ENCODE measurements at regions of chr20 and their contacts with region 1.

Region 1: DNA sequence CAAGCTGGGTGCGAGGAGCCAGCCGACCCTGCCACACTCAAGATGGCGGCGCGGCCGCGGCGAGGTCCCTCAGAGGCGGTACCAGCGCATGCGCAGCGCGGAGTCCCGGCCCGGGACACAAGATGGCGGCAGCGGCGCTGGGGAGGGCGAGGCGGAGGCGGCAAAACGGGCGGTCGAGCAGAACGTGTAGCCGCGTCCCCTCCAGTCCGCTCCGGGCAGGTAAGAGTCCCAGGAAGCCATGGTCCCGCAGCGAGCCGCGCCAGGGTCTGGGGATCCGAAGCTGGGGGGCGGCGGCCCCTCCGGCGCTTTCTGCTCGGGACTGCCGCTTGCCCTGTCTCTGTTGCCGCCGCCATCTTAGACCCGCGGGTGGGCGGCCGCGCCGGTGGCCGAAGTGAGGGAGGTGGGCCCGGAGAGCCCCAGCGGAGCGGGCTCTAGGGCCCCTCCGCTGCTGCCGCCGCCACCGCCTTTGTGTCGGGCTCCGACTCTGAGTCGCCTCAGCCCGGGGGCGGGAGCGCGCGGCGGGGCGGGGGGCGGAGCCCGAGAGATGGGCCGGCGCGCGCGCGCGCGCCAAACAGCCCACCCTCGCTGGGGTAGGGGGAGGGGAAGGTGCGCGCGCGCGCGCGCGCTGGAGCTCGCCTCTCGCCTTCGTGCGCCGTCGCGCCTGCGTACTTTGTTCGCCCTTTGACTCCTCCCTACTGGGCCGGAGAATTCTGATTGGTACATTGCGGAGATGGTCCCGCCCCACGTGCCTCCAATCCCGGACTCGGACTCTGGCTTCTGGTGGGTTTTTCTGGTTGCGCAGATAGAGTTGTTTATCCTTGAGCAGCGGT is at the start of gene PCIF1:
- DNase-seq: peak; percentile 99
- ATAC-seq: peak; percentile 84
- H3K4me3 Mint-ChIP-seq: peak within 1 kb of the TSS; percentile 97
- H3K27ac Mint-ChIP-seq: peak within 1 kb of the TSS; percentile 99
- H3K4me1 Mint-ChIP-seq: peaks cover 27% of the 10 kb centered on the region
- H3K27me3 Mint-ChIP-seq: no peaks in the 10 kb centered on the region
- total RNA-seq, gene PCIF1: 24.0 to 27.4 TPM

Region 2: GRCh38 chr20:45792332-45792686 is 142.5 kb before region 1 on chr20:
- CTCF ChIA-PET with region 1: no interaction called
- POLR2A ChIA-PET with region 1: no interaction called
- intact Hi-C with region 1: loop called in 1 of 2 experiments (anchors 1 kb)
- DNase-seq: peak; percentile 12
- ATAC-seq: peak; percentile 2
- H3K4me3 Mint-ChIP-seq: peak overlapping the region; percentile 81
- H3K27ac Mint-ChIP-seq: peak overlapping the region; percentile 80
- H3K4me1 Mint-ChIP-seq: peaks cover 13% of the 10 kb centered on the region
- H3K27me3 Mint-ChIP-seq: no peaks in the 10 kb centered on the region

Region 3: GRCh38 chr20:45812157-45813020 is 122.4 kb before region 1 on chr20 and contains the start of gene UBE2C:
- CTCF ChIA-PET with region 1: no interaction called
- POLR2A ChIA-PET with region 1: interaction called, 3 read pairs
- intact Hi-C with region 1: loop called (anchors 1 to 2 kb)
- DNase-seq: peak; percentile 97
- ATAC-seq: peak; percentile 100
- H3K4me3 Mint-ChIP-seq: peak within 1 kb of the TSS; percentile 99
- H3K27ac Mint-ChIP-seq: peak within 1 kb of the TSS; percentile 88
- H3K4me1 Mint-ChIP-seq: peaks cover 21% of the 10 kb centered on the region
- H3K27me3 Mint-ChIP-seq: no peaks in the 10 kb centered on the region
- total RNA-seq, gene UBE2C: 175 to 230 TPM

Region 4: DNA sequence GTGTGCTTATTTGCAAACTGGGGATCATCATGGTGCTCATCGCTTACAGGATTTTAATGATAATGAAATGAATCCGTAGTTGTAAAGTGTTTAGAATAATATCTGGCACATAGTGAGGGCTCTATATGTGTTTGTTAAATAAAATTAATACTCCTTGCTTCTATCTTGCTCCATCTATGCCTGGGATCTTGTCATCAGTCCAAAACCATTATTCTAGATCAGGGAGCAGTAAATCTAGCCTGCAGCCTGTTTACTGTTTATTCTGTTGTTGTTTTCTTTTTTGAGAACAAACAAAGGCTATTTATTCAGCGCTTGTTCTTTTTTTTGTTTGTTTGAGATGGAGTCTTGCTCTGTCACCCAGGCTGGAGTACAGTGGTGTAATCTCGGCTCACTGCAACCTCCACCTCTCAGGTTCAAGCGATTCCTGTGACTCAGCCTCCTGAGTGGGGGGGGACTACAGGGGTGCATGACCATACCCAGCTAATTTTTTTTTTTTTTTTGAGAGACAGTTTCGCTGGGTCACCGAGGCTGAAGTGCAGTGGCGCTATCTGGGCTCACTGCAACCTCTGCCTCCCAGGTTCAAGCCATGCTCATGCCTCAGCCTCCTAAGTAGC is 85.7 kb before region 1 on chr20:
- CTCF ChIA-PET with region 1: no interaction called
- POLR2A ChIA-PET with region 1: no interaction called
- intact Hi-C with region 1: no loop called
- DNase-seq: no peak
- ATAC-seq: no peak
- H3K4me3 Mint-ChIP-seq: no peak overlapping the region
- H3K27ac Mint-ChIP-seq: no peak overlapping the region
- H3K4me1 Mint-ChIP-seq: peaks cover 6% of the 10 kb centered on the region
- H3K27me3 Mint-ChIP-seq: no peaks in the 10 kb centered on the region

Region 5: DNA sequence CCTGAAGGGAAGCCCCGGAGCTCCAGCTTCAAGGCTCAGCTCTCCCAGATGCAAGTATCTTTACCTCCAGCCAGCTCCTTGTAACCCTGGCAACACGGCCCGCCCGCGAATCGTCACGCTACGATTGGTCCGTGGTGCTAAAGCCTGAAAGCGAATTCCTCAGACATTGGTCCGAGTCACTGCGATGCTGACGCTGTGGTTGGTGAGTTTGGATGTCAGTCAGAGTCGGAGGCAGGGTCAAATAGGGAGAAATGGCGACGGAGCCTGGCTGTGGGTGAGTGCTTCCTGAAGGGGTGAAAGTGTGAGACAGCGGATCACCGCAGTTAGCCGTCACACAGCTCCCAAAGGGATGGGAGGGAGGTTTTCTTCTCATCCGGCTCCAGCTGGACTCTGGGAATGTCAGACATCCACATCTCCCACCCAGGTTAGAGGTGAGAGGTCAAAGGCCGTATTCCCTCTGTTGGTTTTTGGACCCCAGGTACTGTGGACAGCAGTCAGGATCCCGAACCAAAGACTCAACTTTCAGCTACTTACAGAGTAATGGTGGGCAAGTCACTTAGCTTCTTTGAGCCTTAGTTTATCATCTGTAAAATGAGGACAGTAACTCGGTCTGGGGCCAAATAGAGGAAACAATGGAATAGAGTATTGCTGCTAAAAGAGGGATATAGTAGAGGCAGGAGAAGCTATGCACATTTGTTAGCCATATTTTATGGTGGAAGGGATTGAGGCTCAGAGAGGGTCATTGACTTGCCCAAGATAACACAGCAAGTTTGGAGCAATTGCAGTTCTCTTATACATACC is 53.6 kb before region 1 on chr20 and contains the start of gene ZSWIM1:
- CTCF ChIA-PET with region 1: interaction called, 5 read pairs
- POLR2A ChIA-PET with region 1: interaction called, 8 read pairs
- intact Hi-C with region 1: loop called (anchors 1 to 2 kb)
- DNase-seq: peak; percentile 99
- ATAC-seq: peak; percentile 98
- H3K4me3 Mint-ChIP-seq: peak within 1 kb of the TSS; percentile 94
- H3K27ac Mint-ChIP-seq: peak within 1 kb of the TSS; percentile 95
- H3K4me1 Mint-ChIP-seq: peaks cover 42% of the 10 kb centered on the region
- H3K27me3 Mint-ChIP-seq: no peaks in the 10 kb centered on the region
- total RNA-seq, gene ZSWIM1: 9.4 to 10.7 TPM

Region 6: DNA sequence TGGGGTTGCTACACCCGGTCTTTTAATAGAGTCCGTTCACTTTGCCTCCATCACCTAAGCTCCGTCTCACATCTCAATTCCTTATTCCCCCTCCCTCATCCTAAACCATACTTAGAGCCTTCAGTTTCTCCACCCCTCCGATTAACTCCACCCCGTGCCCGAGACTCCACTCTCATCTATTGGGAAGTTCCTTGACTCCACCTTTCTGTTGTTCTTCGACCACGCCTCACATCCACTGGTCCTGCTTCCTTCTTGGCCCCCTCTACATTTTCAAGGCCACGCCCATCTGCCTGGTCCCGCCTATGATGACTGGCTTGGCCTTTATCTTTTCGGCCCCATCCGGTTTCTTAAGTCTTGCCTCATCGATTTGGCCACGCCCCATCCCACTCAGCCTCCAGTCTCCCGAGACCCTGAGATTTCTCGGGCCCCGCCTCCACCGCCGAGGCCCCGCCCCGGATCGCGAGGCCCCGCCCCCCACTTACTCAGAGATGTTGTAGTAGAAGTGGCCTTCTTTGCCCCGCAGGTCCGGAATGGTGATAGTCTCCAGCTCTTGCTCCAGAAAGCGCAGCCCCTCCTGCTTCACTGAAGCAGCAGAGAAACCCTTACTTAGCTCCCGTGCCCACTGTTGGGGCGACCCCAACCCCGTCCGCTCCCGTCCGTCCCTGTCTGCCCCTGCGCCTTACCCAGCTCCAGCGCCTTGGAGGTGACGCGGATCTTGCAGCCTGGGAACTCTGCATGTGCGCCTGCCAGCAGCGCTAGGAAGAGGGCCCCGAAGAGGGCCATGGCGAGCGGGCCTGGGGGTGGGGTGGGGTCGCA is 23.9 kb before region 1 on chr20:
- CTCF ChIA-PET with region 1: no interaction called
- POLR2A ChIA-PET with region 1: interaction called, 3 read pairs
- intact Hi-C with region 1: loop called (anchors 1 kb)
- DNase-seq: peak; percentile 98
- ATAC-seq: peak; percentile 92
- H3K4me3 Mint-ChIP-seq: peak overlapping the region; percentile 68
- H3K27ac Mint-ChIP-seq: peak overlapping the region; percentile 80
- H3K4me1 Mint-ChIP-seq: peaks cover 16% of the 10 kb centered on the region
- H3K27me3 Mint-ChIP-seq: peaks cover 12% of the 10 kb centered on the region

Region 7: DNA sequence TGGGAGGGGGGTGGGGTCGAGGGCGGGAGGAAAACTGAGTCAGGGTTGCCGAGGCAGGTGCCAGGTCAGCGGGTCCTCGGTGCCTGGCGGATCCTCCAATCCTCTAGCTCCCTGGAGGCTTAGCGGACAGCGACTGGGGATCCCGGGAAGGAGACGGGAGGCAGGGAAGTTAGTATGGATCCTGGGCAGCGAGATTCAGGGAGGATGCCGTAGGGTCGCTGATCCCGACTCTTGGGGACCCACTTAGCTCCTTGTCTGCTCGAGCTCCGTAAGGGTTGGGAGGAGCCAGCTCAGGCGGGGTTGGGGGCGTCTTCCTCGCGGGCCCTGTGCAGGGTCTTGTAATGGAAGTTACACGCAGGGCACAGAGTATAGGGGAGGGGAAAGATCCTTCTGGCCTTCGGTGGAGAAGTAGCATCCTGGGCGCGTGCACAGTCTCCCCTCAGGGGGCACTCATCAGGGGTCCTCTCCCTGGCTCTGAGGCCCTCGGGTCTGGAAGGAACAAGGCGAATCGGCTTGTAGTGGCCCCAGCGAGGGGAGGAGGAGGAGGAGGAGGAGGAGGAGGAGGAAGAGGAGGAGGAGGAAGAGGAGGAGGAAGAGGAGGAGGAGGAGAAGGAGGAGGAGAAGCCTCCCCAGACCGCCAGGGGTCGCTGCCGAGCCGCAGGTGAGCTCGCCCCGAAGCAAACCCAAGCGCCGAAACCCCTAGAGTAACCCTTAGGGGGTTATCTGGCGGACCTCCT is 87.8 kb after region 1 on chr20:
- CTCF ChIA-PET with region 1: interaction called, 4 read pairs
- POLR2A ChIA-PET with region 1: no interaction called
- intact Hi-C with region 1: loop called in 1 of 2 experiments (anchors 1 kb)
- DNase-seq: peak; percentile 88
- ATAC-seq: peak; percentile 60
- H3K4me3 Mint-ChIP-seq: peak overlapping the region; percentile 57
- H3K27ac Mint-ChIP-seq: no peak overlapping the region
- H3K4me1 Mint-ChIP-seq: peaks cover 17% of the 10 kb centered on the region
- H3K27me3 Mint-ChIP-seq: peaks cover 29% of the 10 kb centered on the region

Region 8: GRCh38 chr20:46070215-46070900 is 135.6 kb after region 1 on chr20:
- CTCF ChIA-PET with region 1: no interaction called
- POLR2A ChIA-PET with region 1: no interaction called
- intact Hi-C with region 1: no loop called
- DNase-seq: no peak
- ATAC-seq: no peak
- H3K4me3 Mint-ChIP-seq: no peak overlapping the region
- H3K27ac Mint-ChIP-seq: no peak overlapping the region
- H3K4me1 Mint-ChIP-seq: no peaks in the 10 kb centered on the region
- H3K27me3 Mint-ChIP-seq: no peaks in the 10 kb centered on the region